Activated naive CD4-positive, alpha-beta T cell treated with anti-CD3 and anti-CD28 coated beads for 36 hours (primary cell): ENCODE measurements at regions of chr12 and their contacts with region 1.

Region 1: DNA sequence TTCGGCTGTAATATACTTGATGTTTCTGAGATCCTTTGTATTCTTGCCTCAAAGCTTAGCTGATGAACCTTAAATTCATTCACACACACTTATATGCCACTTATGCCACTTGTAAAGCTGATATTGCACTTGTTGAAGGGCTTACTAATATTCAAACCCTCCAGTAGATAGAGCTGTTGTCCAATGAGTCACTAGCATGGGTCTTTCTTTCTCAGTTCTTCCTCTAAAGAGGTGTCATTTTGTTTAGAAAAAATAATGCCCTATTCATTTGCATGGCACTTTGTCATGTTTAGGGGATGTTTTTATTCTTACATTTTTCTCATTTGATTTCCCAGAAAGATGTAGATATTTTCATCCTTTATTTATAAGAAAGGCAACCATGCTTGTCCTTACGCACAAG is 56.4 kb downstream of the MON2 start:
- DNase-seq: no peak
- H3K4me3 Mint-ChIP-seq: no peak overlapping the region
- H3K27ac Mint-ChIP-seq: no peak overlapping the region
- H3K4me1 Mint-ChIP-seq: peaks cover 36% of the 10 kb centered on the region
- H3K27me3 Mint-ChIP-seq: no peaks in the 10 kb centered on the region

Region 2: GRCh38 chr12:61846765-61847164 is 676.2 kb before region 1 on chr12:
- CTCF ChIA-PET with region 1: no interaction called
- intact Hi-C with region 1: no loop called
- DNase-seq: no peak
- H3K4me3 Mint-ChIP-seq: no peak overlapping the region
- H3K27ac Mint-ChIP-seq: no peak overlapping the region
- H3K4me1 Mint-ChIP-seq: no peaks in the 10 kb centered on the region
- H3K27me3 Mint-ChIP-seq: no peaks in the 10 kb centered on the region

Region 3: DNA sequence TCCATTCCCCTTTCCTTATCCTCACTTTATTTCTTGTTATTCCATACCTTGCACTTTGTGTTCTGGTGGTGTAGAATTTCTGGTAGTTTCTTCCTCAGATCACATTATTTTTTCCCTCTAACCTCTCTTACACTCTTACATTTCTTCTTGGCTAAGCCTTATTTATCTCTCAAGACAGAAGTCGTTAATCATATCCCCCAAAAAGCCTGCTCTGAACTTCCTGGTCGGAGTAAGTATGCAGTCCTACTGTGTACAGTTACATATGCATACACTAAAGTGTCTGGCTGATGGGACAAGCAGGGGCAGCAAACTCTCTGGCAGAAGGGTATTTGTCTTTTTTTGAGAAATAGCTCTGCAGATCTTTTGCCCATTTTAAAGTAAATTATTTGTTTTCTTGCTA is 295.9 kb before region 1 on chr12:
- CTCF ChIA-PET with region 1: no interaction called
- intact Hi-C with region 1: no loop called
- DNase-seq: no peak
- H3K4me3 Mint-ChIP-seq: no peak overlapping the region
- H3K27ac Mint-ChIP-seq: no peak overlapping the region
- H3K4me1 Mint-ChIP-seq: no peaks in the 10 kb centered on the region
- H3K27me3 Mint-ChIP-seq: no peaks in the 10 kb centered on the region

Region 4: GRCh38 chr12:62259993-62260732 is 262.8 kb before region 1 on chr12 and contains the start of gene USP15:
- CTCF ChIA-PET with region 1: no interaction called
- intact Hi-C with region 1: loop called (anchors 5 kb)
- DNase-seq: peak; percentile 96
- H3K4me3 Mint-ChIP-seq: peak within 1 kb of the TSS; percentile 85
- H3K27ac Mint-ChIP-seq: peak within 1 kb of the TSS; percentile 98
- H3K4me1 Mint-ChIP-seq: peaks cover 58% of the 10 kb centered on the region
- H3K27me3 Mint-ChIP-seq: no peaks in the 10 kb centered on the region
- total RNA-seq, gene USP15: 84.5 to 95.5 TPM

Region 5: DNA sequence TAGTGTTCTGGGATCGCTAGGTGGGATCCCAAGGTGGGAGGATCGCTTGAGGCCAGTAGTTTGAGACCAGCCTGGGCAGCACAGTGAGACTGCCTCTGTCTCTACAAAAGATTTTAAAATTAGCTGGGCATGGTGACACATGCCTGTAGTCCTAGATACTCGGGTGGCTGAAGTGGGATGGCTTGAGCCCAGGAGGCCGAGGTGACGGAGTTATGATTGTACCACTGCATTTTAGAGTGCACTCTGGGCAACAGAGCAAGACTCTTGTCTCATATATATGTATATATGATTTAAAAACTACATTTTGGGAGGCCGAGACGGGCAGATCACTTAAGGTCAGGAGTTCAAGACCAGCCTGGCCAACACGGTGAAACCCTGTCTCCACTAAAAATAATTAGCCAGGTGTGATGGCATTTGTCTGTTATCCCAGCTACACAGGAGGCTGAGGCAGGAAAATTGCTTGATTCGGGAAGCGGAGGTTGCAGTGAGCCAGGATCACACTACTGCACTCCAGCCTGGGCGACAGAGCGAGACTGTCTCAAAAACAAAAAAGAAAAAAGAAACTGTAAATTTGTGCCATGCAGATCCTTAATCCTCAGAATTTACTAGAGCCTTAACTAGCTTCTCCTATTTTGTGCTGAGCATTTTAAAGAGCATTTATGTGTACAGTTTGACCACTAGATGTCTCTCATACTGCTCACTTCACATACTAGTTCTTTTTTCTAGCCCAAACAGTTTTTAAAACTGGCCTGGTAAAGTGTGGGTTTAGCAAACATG is 58.5 kb after region 1 on chr12:
- CTCF ChIA-PET with region 1: no interaction called
- intact Hi-C with region 1: loop called (anchors 5 kb)
- DNase-seq: no peak
- H3K4me3 Mint-ChIP-seq: no peak overlapping the region
- H3K27ac Mint-ChIP-seq: no peak overlapping the region
- H3K4me1 Mint-ChIP-seq: no peaks in the 10 kb centered on the region
- H3K27me3 Mint-ChIP-seq: no peaks in the 10 kb centered on the region

Region 6: GRCh38 chr12:62793256-62794217 is 270.6 kb after region 1 on chr12:
- CTCF ChIA-PET with region 1: interaction called, 6 read pairs
- intact Hi-C with region 1: loop called (anchors 1 kb)
- DNase-seq: peak; percentile 83
- H3K4me3 Mint-ChIP-seq: no peak overlapping the region
- H3K27ac Mint-ChIP-seq: no peak overlapping the region
- H3K4me1 Mint-ChIP-seq: no peaks in the 10 kb centered on the region
- H3K27me3 Mint-ChIP-seq: no peaks in the 10 kb centered on the region

Region 7: GRCh38 chr12:62813031-62813829 is 290.2 kb after region 1 on chr12:
- CTCF ChIA-PET with region 1: interaction called, 5 read pairs
- intact Hi-C with region 1: loop called (anchors 5 kb)
- DNase-seq: peak; percentile 60
- H3K4me3 Mint-ChIP-seq: peak overlapping the region; percentile 52
- H3K27ac Mint-ChIP-seq: no peak overlapping the region
- H3K4me1 Mint-ChIP-seq: peaks cover 8% of the 10 kb centered on the region
- H3K27me3 Mint-ChIP-seq: peaks cover 16% of the 10 kb centered on the region